ENCODE measurements at regions of chr11 and their contacts with region 1.

Region 1: DNA sequence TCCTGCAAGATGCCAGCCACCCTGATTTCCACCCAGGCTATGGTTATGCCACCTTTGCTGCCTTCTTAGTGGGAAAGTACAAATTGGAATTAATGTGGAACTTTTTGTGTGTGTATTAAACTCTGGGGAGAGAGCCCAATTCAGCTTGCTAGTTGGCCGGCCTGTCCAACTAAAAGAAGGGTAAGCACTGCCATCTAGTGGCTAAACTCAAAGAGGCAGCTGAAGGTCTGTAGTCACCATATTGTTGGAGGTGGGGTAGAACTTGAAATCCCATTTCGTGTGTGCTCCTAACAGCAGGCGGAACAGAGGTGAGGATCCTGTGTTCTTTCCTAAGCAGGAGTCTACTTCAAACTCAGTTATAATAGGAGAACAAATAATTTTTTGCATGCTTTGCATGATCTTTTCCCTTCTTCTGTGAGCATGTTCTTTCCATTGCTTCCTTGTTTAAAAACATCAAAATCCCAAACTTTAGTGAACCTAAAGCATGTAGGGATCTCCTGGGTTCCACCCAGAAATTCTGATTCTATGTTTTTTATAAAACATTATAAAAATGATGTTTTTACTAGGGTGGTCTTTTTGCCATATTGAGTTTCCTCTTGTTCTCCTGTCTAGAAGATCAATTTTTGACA is 138.8 kb upstream of the SORL1-AS1 start:
- DNase-seq: peak in 2 of 4 donors; percentile 77 to 83
- ATAC-seq: peak; percentile 82
- H3K4me3 ChIP-seq: no peak overlapping the region
- H3K27ac ChIP-seq: no peak overlapping the region
- H3K4me1 ChIP-seq: peaks cover 0 to 20% of the 10 kb centered on the region in 2 donors
- H3K27me3 ChIP-seq: no peaks in the 10 kb centered on the region
- CTCF ChIP-seq: peak; percentile 82 to 91

Region 2: DNA sequence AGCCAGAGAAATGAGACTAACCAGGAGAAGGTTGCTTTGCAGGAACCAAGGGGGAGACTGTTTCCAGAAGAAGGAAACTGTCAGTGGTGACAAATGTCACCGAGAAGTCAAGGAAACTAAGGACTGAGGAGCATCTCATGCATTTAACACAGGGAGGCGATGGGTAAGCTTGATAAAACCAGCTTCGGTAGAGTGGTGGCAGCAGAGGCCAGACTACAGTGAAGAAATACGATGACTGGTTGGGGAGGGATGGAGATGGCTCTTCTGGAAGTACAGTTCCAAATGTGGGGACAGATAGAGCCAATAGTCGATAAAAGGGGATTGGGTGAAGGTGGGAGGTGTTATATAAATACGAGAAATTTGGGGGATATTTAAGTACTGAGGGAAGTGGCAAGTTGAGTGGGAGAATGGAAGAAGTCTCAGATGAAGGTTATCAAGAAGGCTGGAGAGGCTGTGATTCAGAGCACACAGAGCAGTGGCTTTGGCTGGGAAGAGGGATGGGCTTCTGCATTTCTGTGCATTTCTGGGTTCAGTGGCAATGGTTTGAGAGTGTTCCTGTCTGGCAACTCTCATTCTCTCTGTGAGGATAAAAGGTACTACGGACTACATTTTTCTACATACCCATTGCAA is 269.8 kb before region 1 on chr11:
- intact Hi-C with region 1: loop called in 1 of 2 experiments (anchors 5 kb)
- DNase-seq: peak in 2 of 4 donors; percentile 20 to 52
- ATAC-seq: peak; percentile 88
- H3K4me3 ChIP-seq: no peak overlapping the region
- H3K27ac ChIP-seq: no peak overlapping the region
- H3K4me1 ChIP-seq: no peaks in the 10 kb centered on the region
- H3K27me3 ChIP-seq: no peaks in the 10 kb centered on the region
- CTCF ChIP-seq: peak in 1 of 2 donors; percentile 12

Region 3: GRCh38 chr11:121334973-121335710 is 256.4 kb before region 1 on chr11:
- intact Hi-C with region 1: no loop called
- DNase-seq: no peak
- ATAC-seq: no peak
- H3K4me3 ChIP-seq: no peak overlapping the region
- H3K27ac ChIP-seq: no peak overlapping the region
- H3K4me1 ChIP-seq: peaks cover 0 to 8% of the 10 kb centered on the region in 2 donors
- H3K27me3 ChIP-seq: no peaks in the 10 kb centered on the region
- CTCF ChIP-seq: no peak

Region 4: GRCh38 chr11:121696177-121696871 is 104.8 kb after region 1 on chr11:
- intact Hi-C with region 1: no loop called
- DNase-seq: no peak
- ATAC-seq: no peak
- H3K4me3 ChIP-seq: no peak overlapping the region
- H3K27ac ChIP-seq: no peak overlapping the region
- H3K4me1 ChIP-seq: no peaks in the 10 kb centered on the region
- H3K27me3 ChIP-seq: peaks cover 0 to 9% of the 10 kb centered on the region in 2 donors
- CTCF ChIP-seq: no peak

Measured in left lung (tissue), 14 donors.